ENCODE measurements at regions of chr10 and their contacts with region 1.

Region 1: GRCh38 chr10:89029785-89030437 is 39.3 kb downstream of the FAS start:
- DNase-seq: peak; percentile 46 to 74 (median 53)
- H3K4me3 ChIP-seq: no peak overlapping the region
- H3K4me3 Mint-ChIP-seq: no peak overlapping the region
- H3K27ac ChIP-seq: no peak overlapping the region
- H3K27ac Mint-ChIP-seq: peak overlapping the region in 3 of 8 donors; percentile 5 to 73 (median 23)
- H3K4me1 ChIP-seq: no peaks in the 10 kb centered on the region
- H3K4me1 Mint-ChIP-seq: peaks cover 4 to 12% (median 10%) of the 10 kb centered on the region in 3 donors
- H3K27me3 ChIP-seq: no peaks in the 10 kb centered on the region
- H3K27me3 Mint-ChIP-seq: no peaks in the 10 kb centered on the region

Region 2: GRCh38 chr10:88791924-88792323 is 238.0 kb before region 1 on chr10:
- CTCF ChIA-PET with region 1: no interaction called
- POLR2A ChIA-PET with region 1: no interaction called
- DNase-seq: no peak
- H3K4me3 ChIP-seq: no peak overlapping the region
- H3K4me3 Mint-ChIP-seq: no peak overlapping the region
- H3K27ac ChIP-seq: no peak overlapping the region
- H3K27ac Mint-ChIP-seq: no peak overlapping the region
- H3K4me1 ChIP-seq: peaks cover 6% of the 10 kb centered on the region
- H3K4me1 Mint-ChIP-seq: peaks cover 13 to 20% (median 15%) of the 10 kb centered on the region in 3 donors
- H3K27me3 ChIP-seq: no peaks in the 10 kb centered on the region
- H3K27me3 Mint-ChIP-seq: no peaks in the 10 kb centered on the region

Region 3: GRCh38 chr10:88865281-88865876 is 164.5 kb before region 1 on chr10:
- CTCF ChIA-PET with region 1: no interaction called
- POLR2A ChIA-PET with region 1: no interaction called
- DNase-seq: no peak
- H3K4me3 ChIP-seq: no peak overlapping the region
- H3K4me3 Mint-ChIP-seq: no peak overlapping the region
- H3K27ac ChIP-seq: no peak overlapping the region
- H3K27ac Mint-ChIP-seq: no peak overlapping the region
- H3K4me1 ChIP-seq: no peaks in the 10 kb centered on the region
- H3K4me1 Mint-ChIP-seq: no peaks in the 10 kb centered on the region
- H3K27me3 ChIP-seq: no peaks in the 10 kb centered on the region
- H3K27me3 Mint-ChIP-seq: peaks cover 6 to 17% of the 10 kb centered on the region in 2 donors

Region 4: GRCh38 chr10:88990384-88991160 is 39.3 kb before region 1 on chr10 and contains the start of gene FAS:
- CTCF ChIA-PET with region 1: interaction called, 16 read pairs
- POLR2A ChIA-PET with region 1: interaction called, 3 read pairs
- DNase-seq: peak; percentile 64 to 88 (median 77)
- H3K4me3 ChIP-seq: peak within 1 kb of the TSS; percentile 88
- H3K4me3 Mint-ChIP-seq: peak within 1 kb of the TSS; percentile 93 to 100 (median 99)
- H3K27ac ChIP-seq: peak within 1 kb of the TSS; percentile 83
- H3K27ac Mint-ChIP-seq: peak within 1 kb of the TSS; percentile 91 to 99 (median 97)
- H3K4me1 ChIP-seq: peaks cover 65% of the 10 kb centered on the region
- H3K4me1 Mint-ChIP-seq: peaks cover 65 to 83% (median 75%) of the 10 kb centered on the region in 3 donors
- H3K27me3 ChIP-seq: no peaks in the 10 kb centered on the region
- H3K27me3 Mint-ChIP-seq: no peaks in the 10 kb centered on the region
- total RNA-seq, gene FAS: 77.9 to 78.5 TPM

Region 5: GRCh38 chr10:89053555-89053954 is 23.6 kb after region 1 on chr10:
- CTCF ChIA-PET with region 1: interaction called, 10 read pairs
- POLR2A ChIA-PET with region 1: no interaction called
- DNase-seq: no peak
- H3K4me3 ChIP-seq: no peak overlapping the region
- H3K4me3 Mint-ChIP-seq: no peak overlapping the region
- H3K27ac ChIP-seq: no peak overlapping the region
- H3K27ac Mint-ChIP-seq: peak overlapping the region in 1 of 8 donors; percentile 52
- H3K4me1 ChIP-seq: no peaks in the 10 kb centered on the region
- H3K4me1 Mint-ChIP-seq: no peaks in the 10 kb centered on the region
- H3K27me3 ChIP-seq: no peaks in the 10 kb centered on the region
- H3K27me3 Mint-ChIP-seq: no peaks in the 10 kb centered on the region

Region 6: DNA sequence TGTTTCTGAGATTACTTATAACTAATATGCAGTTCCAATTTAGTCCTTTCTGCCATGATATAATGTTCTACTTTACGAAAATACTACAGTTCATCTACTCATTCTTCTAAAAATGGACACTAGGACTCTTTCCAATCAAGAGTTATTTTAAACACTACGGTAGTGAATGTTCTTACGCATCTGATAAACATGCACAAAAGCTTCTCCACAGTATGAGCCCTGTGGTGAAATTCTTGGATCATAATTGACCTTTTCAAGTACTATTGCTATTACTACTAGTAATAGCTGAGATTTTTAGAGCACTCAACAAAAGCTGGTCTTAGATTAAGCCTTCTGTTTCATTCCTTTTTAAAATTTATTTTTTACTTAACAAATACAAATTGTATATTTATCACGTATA is 70.8 kb after region 1 on chr10:
- CTCF ChIA-PET with region 1: no interaction called
- POLR2A ChIA-PET with region 1: no interaction called
- DNase-seq: no peak
- H3K4me3 ChIP-seq: no peak overlapping the region
- H3K4me3 Mint-ChIP-seq: no peak overlapping the region
- H3K27ac ChIP-seq: no peak overlapping the region
- H3K27ac Mint-ChIP-seq: no peak overlapping the region
- H3K4me1 ChIP-seq: no peaks in the 10 kb centered on the region
- H3K4me1 Mint-ChIP-seq: peaks cover 0 to 12% (median 0%) of the 10 kb centered on the region in 3 donors
- H3K27me3 ChIP-seq: no peaks in the 10 kb centered on the region
- H3K27me3 Mint-ChIP-seq: no peaks in the 10 kb centered on the region

Region 7: DNA sequence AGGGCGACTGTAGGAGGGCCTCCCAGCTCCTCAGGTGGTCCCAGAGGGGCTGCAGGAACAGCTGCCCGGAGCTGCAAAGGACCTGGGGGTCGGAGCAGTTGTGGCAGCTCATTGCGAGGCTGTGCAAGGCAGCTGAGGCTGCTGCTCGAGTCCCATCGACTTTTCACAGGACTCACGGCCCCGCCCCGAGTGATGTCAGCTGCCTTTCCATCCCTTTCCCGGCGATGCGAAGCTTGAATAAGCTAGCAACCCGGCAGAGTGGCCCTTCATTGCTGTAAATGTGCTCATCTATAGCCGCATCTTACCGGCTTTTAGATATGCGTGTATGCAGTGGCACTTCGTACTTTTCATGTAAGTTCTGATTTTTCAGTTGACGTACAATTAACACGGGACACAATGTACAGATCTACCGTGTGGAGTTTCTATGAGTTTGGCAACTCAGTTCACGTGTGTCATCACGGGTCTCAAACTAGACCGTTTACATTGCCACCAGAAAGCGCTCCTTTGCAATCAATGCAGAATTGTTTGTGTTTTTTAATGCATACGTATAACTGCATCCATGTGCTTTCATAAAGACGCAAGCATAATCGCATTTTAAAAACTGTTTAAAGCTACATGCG is 177.4 kb after region 1 on chr10 and contains the start of gene CH25H:
- CTCF ChIA-PET with region 1: interaction called, 17 read pairs
- POLR2A ChIA-PET with region 1: no interaction called
- DNase-seq: peak; percentile 20 to 53 (median 31)
- H3K4me3 ChIP-seq: peak within 1 kb of the TSS; percentile 66
- H3K4me3 Mint-ChIP-seq: peak within 1 kb of the TSS; percentile 79 to 91 (median 83)
- H3K27ac ChIP-seq: no peak within 1 kb of the TSS
- H3K27ac Mint-ChIP-seq: peak within 1 kb of the TSS in 5 of 8 donors; percentile 54 to 89 (median 77)
- H3K4me1 ChIP-seq: peaks cover 19% of the 10 kb centered on the region
- H3K4me1 Mint-ChIP-seq: peaks cover 10 to 15% (median 15%) of the 10 kb centered on the region in 3 donors
- H3K27me3 ChIP-seq: peaks cover 19% of the 10 kb centered on the region
- H3K27me3 Mint-ChIP-seq: peaks cover 19 to 48% of the 10 kb centered on the region in 2 donors
- total RNA-seq, gene CH25H: not detected

Region 8: GRCh38 chr10:89217057-89217990 is 187.4 kb after region 1 on chr10:
- CTCF ChIA-PET with region 1: interaction called, 41 read pairs
- POLR2A ChIA-PET with region 1: no interaction called
- DNase-seq: peak; percentile 42 to 68 (median 47)
- H3K4me3 ChIP-seq: no peak overlapping the region
- H3K4me3 Mint-ChIP-seq: no peak overlapping the region
- H3K27ac ChIP-seq: no peak overlapping the region
- H3K27ac Mint-ChIP-seq: peak overlapping the region in 4 of 8 donors; percentile 6 to 82 (median 41)
- H3K4me1 ChIP-seq: peaks cover 6% of the 10 kb centered on the region
- H3K4me1 Mint-ChIP-seq: peaks cover 8 to 17% (median 14%) of the 10 kb centered on the region in 3 donors
- H3K27me3 ChIP-seq: no peaks in the 10 kb centered on the region
- H3K27me3 Mint-ChIP-seq: peaks cover 0 to 2% of the 10 kb centered on the region in 2 donors